WTC11 (cell line): ENCODE measurements at regions of chr22 and their contacts with region 1.

Region 1: DNA sequence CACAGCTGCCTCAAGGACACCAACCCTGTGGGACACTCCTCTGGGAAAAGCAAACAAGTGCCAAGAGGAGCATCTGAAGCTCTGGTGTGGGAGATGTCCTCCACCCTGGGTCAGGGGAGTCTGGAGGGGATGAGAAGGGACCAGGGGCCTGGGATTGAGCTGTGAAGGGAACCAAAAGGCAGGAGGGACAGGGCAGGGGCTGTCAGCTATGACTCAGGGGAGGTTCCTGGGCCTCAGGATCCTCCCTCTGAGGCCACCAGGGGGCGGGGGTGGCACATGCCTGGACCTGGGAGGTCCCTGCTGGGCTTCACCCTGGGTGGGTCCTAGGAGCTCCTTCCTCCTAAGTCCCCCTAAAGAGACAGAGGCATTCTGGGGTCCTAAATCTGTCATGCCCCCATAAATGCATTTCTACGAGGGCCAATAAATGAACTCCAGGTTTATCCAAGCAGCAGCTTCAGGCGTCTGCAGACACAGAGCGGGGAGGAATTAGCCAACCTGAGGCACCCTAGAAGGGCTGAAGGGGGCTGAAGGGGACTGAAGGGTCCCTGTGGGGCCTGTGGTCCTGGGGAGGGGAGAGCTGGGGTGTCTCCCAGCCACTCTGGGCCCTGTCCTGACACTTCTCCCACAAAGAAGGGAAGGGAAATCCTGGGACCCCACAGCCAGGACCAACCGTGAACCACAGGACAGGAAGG is 31.9 kb upstream of the IGLL5 start:
- DNase-seq: peak; percentile 64
- ATAC-seq: peak; percentile 92
- H3K4me3 Mint-ChIP-seq: no peak overlapping the region
- H3K27ac Mint-ChIP-seq: no peak overlapping the region
- H3K4me1 Mint-ChIP-seq: no peaks in the 10 kb centered on the region
- H3K27me3 Mint-ChIP-seq: peaks cover 86% of the 10 kb centered on the region
- CTCF ChIP-seq: peak; percentile 46; the same call in 1 of the 2 replicates

Region 2: DNA sequence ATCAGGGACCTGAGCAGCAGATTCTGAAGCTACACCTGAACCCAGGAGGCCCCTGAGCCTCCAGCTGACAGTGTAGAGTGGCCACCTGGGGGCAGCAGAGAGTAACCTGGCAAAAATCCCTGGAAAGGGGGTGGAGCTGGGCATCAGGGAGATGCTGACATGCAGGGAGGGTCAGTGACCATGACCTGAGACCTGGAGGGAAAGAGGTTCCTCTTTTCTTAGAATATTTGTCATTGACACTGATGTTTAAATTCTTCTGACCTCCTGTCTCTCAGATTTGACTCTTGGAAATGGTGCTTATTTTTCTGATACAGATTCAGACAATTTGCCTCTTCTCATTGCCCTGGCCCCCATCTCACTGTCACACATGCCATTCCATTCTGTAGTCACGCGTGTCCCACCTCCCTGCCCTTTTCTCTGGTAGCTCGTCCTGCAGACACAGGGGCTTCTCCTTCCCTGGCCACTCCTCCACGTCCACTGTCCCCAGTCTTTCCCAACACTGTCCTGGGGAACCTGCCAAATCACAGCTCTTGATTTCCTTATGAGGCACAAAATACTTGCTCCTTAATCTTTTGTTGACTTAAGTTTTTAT is 85.4 kb before region 1 on chr22:
- CTCF ChIA-PET with region 1: interaction called, 17 read pairs
- POLR2A ChIA-PET with region 1: no interaction called
- DNase-seq: peak; percentile 84
- ATAC-seq: peak; percentile 88
- H3K4me3 Mint-ChIP-seq: no peak overlapping the region
- H3K27ac Mint-ChIP-seq: no peak overlapping the region
- H3K4me1 Mint-ChIP-seq: no peaks in the 10 kb centered on the region
- H3K27me3 Mint-ChIP-seq: peaks cover 99% of the 10 kb centered on the region
- CTCF ChIP-seq: peak; percentile 73; the same call in 1 of the 2 replicates

Region 3: DNA sequence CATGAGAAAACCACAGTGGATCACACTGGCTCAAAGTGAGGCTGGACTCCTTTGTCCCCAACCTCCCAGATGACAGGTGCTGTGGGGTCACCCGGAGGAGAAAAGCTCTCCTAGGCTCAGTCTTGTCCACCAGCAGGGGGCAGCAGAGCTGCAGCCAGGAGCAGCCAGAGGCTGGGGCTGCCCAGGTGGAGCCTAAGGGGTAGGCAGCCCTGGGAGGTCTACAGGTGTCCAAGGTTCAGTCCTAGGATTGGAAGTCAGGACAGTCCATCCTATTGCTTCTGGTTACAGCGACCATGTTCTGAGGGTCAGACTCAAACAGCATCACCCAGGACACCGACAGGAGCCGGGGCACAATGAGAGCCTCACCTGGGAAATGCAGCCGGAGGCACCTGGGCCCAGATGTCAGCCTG is 45.7 kb before region 1 on chr22:
- CTCF ChIA-PET with region 1: interaction called, 15 read pairs
- POLR2A ChIA-PET with region 1: no interaction called
- DNase-seq: peak; percentile 68
- ATAC-seq: peak; percentile 91
- H3K4me3 Mint-ChIP-seq: no peak overlapping the region
- H3K27ac Mint-ChIP-seq: no peak overlapping the region
- H3K4me1 Mint-ChIP-seq: no peaks in the 10 kb centered on the region
- H3K27me3 Mint-ChIP-seq: peaks cover 84% of the 10 kb centered on the region
- CTCF ChIP-seq: peak; percentile 66; the same call in 1 of the 2 replicates

Region 4: GRCh38 chr22:22877523-22878210 is 21.9 kb after region 1 on chr22:
- CTCF ChIA-PET with region 1: interaction called, 102 read pairs
- POLR2A ChIA-PET with region 1: no interaction called
- DNase-seq: peak; percentile 85
- ATAC-seq: peak; percentile 83
- H3K4me3 Mint-ChIP-seq: no peak overlapping the region
- H3K27ac Mint-ChIP-seq: no peak overlapping the region
- H3K4me1 Mint-ChIP-seq: no peaks in the 10 kb centered on the region
- H3K27me3 Mint-ChIP-seq: peaks cover 79% of the 10 kb centered on the region
- CTCF ChIP-seq: peak; percentile 78

Region 5: GRCh38 chr22:22913989-22914388 is 58.2 kb after region 1 on chr22:
- CTCF ChIA-PET with region 1: no interaction called
- POLR2A ChIA-PET with region 1: no interaction called
- DNase-seq: no peak
- ATAC-seq: no peak
- H3K4me3 Mint-ChIP-seq: no peak overlapping the region
- H3K27ac Mint-ChIP-seq: no peak overlapping the region
- H3K4me1 Mint-ChIP-seq: no peaks in the 10 kb centered on the region; the same call in 1 of the 2 replicates
- H3K27me3 Mint-ChIP-seq: peaks cover 87% of the 10 kb centered on the region
- CTCF ChIP-seq: no peak

Region 6: DNA sequence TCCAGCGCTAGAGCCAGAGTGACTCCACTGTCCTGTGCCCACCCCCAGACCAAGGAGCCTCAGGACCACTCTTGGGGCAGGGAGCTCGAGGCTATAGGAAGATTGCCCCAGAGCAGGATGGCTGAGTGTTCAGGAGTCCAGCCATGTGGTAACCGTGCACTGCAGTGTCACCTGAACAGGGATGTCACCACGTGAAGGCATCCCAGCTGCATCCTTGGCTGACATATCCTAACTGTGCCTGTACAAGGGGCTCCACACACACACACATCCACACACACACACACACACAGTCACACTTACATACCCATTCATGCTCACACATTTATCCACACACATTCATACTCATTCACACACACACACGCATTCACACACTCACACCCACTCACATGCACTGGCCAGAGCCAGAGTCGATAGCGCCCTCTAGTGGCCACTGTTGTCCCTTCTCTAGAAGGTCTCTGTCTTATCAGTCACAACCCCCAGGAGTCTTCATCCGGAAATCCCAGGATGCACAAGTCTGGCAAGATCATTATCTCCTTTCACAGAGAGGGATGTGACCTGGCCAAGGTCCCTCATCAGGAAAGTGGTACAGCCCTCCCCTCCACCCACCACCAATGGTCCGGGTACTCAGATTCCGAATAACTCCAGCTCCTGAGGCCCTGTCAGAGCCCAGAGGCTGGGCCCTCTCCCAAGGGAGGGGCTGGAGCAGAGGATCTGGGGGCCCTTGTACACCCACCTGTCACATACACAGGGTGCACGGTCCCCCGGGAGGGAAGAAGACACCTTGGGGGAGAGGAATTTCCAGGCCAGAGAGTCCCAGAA is 87.0 kb after region 1 on chr22:
- CTCF ChIA-PET with region 1: interaction called, 24 read pairs
- POLR2A ChIA-PET with region 1: no interaction called
- DNase-seq: peak; percentile 91
- ATAC-seq: peak; percentile 88
- H3K4me3 Mint-ChIP-seq: no peak overlapping the region
- H3K27ac Mint-ChIP-seq: no peak overlapping the region
- H3K4me1 Mint-ChIP-seq: no peaks in the 10 kb centered on the region
- H3K27me3 Mint-ChIP-seq: peaks cover 51% of the 10 kb centered on the region
- CTCF ChIP-seq: peak; percentile 94

Region 7: GRCh38 chr22:22968366-22968765 is 112.6 kb after region 1 on chr22:
- CTCF ChIA-PET with region 1: no interaction called
- POLR2A ChIA-PET with region 1: no interaction called
- DNase-seq: no peak
- ATAC-seq: no peak
- H3K4me3 Mint-ChIP-seq: no peak overlapping the region
- H3K27ac Mint-ChIP-seq: no peak overlapping the region
- H3K4me1 Mint-ChIP-seq: no peaks in the 10 kb centered on the region
- H3K27me3 Mint-ChIP-seq: peaks cover 83% of the 10 kb centered on the region
- CTCF ChIP-seq: no peak

Region 8: DNA sequence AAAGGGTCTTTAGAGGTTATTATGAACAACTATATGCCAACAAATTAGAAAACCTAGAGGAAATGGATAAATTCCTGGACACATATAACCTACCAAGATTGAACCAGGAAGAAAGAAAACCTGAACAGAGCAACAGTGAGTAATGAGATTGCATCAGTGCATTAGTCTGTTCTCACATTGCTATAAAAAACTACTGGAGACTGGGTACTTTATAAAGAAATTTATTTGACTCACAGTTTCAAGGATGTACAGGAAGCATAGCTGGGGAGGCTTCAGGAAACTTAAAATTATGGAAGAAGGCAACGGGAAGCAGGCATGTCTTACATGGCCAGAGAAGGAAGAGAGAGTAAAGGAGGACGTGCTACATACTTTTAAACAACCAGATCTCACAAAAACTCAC is 143.8 kb after region 1 on chr22:
- CTCF ChIA-PET with region 1: no interaction called
- POLR2A ChIA-PET with region 1: no interaction called
- DNase-seq: no peak
- ATAC-seq: no peak
- H3K4me3 Mint-ChIP-seq: no peak overlapping the region
- H3K27ac Mint-ChIP-seq: no peak overlapping the region
- H3K4me1 Mint-ChIP-seq: no peaks in the 10 kb centered on the region; the same call in 1 of the 2 replicates
- H3K27me3 Mint-ChIP-seq: peaks cover 74% of the 10 kb centered on the region
- CTCF ChIP-seq: no peak

Region 9: DNA sequence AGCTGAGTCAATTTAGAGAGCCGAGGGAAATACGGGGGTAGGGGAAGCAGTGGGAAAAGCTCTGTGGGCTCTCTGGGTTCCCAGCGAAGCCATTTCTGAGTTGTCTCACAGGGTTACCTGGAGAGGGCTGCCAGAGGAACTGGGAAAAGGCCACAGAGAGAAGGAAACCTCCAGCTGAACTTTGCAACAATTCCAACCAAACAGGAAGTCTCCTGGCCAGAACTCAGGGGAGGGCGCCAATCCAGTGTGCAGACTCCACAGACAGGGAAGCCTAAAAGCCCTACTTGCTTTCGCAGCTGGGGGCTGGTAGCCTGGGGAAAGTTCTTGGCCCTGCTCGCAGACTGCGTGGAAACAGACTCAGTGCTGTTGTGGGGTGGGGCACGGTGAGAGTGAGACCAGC is 191.5 kb after region 1 on chr22:
- CTCF ChIA-PET with region 1: no interaction called
- POLR2A ChIA-PET with region 1: no interaction called
- DNase-seq: no peak
- ATAC-seq: no peak; the same call in 1 of the 2 replicates
- H3K4me3 Mint-ChIP-seq: no peak overlapping the region
- H3K27ac Mint-ChIP-seq: no peak overlapping the region
- H3K4me1 Mint-ChIP-seq: peaks cover 34% of the 10 kb centered on the region
- H3K27me3 Mint-ChIP-seq: peaks cover 34% of the 10 kb centered on the region
- CTCF ChIP-seq: no peak